GM12878 (cell line): ENCODE measurements at regions of chr2 and their contacts with region 1.

Region 1: GRCh38 chr2:59025157-59025757 is 784.1 kb upstream of the FANCL start:
- DNase-seq: no peak
- ATAC-seq: peak; percentile 90
- H3K4me3 ChIP-seq: no peak overlapping the region
- H3K27ac ChIP-seq: no peak overlapping the region
- H3K4me1 ChIP-seq: no peaks in the 10 kb centered on the region
- H3K27me3 ChIP-seq: 0 out of 4 replicates have a peak, but pooled peaks cover 0 to 2% of the 10 kb centered on the region in 2 experiments
- CTCF ChIP-seq: peak; percentile 75 to 96 (median 94)
- EP300 ChIP-seq: no peak
- POLR2A ChIP-seq: no peak
- RAD21 ChIP-seq: peak; percentile 70

Region 2: GRCh38 chr2:59005836-59006615 is 19.2 kb before region 1 on chr2:
- CTCF ChIA-PET with region 1: interaction called, 12 read pairs
- POLR2A ChIA-PET with region 1: no interaction called
- RAD21 ChIA-PET with region 1: no interaction called
- SMC1A ChIA-PET with region 1: interaction called, 5 read pairs
- in situ Hi-C with region 1: no loop called
- intact Hi-C with region 1: no loop called
- DNase-seq: no peak
- ATAC-seq: no peak
- H3K4me3 ChIP-seq: no peak overlapping the region
- H3K27ac ChIP-seq: no peak overlapping the region
- H3K4me1 ChIP-seq: no peaks in the 10 kb centered on the region
- H3K27me3 ChIP-seq: no peaks in the 10 kb centered on the region
- CTCF ChIP-seq: no peak
- EP300 ChIP-seq: no peak
- POLR2A ChIP-seq: no peak
- RAD21 ChIP-seq: no peak

Region 3: GRCh38 chr2:59176737-59177136 is 151.5 kb after region 1 on chr2:
- CTCF ChIA-PET with region 1: interaction called, 13 read pairs
- POLR2A ChIA-PET with region 1: no interaction called
- RAD21 ChIA-PET with region 1: interaction called, 8 read pairs
- SMC1A ChIA-PET with region 1: interaction called, 8 read pairs
- in situ Hi-C with region 1: no loop called
- intact Hi-C with region 1: loop called (anchors 5 kb)
- DNase-seq: no peak
- ATAC-seq: peak; percentile 42; the same call in 1 of the 3 replicates
- H3K4me3 ChIP-seq: no peak overlapping the region
- H3K27ac ChIP-seq: no peak overlapping the region
- H3K4me1 ChIP-seq: no peaks in the 10 kb centered on the region
- H3K27me3 ChIP-seq: no peaks in the 10 kb centered on the region
- CTCF ChIP-seq: peak in 1 of 3 experiments; percentile 20; a peak in 1 of 6 replicates
- EP300 ChIP-seq: no peak
- POLR2A ChIP-seq: no peak
- RAD21 ChIP-seq: no peak

Region 4: DNA sequence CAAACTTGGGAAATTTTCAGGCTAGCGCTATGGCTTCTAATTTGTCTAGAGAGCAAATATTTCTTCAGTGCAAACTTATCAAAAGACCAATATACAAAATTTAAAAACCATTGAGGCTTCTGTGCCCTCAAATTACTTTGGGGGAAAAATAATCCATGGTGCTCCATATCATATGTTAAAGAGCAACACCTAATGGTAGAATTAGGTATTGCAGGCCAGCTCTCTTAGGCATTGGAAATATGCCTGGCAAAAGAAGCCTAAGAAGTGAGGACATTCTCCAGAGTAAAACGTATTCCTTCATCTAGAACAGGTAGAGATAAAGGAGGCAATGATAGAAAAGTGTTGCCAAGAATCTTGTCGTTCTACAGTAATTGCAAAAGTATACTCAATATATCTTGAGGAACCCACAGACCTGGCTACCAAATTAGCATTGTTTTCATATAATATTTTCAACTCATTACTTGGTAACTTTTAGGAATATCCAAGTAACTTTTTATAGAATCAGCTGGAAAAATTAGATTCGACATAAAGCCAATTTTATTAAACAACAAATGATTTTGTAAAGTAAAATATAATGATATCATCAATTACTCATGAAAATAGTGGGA is 1127.1 kb after region 1 on chr2:
- CTCF ChIA-PET with region 1: interaction called, 10 read pairs
- POLR2A ChIA-PET with region 1: no interaction called
- RAD21 ChIA-PET with region 1: no interaction called
- SMC1A ChIA-PET with region 1: interaction called, 4 read pairs
- in situ Hi-C with region 1: no loop called
- intact Hi-C with region 1: no loop called
- DNase-seq: no peak
- ATAC-seq: peak; percentile 55; the same call in 2 of the 3 replicates
- H3K4me3 ChIP-seq: no peak overlapping the region
- H3K27ac ChIP-seq: no peak overlapping the region
- H3K4me1 ChIP-seq: peaks cover 9% of the 10 kb centered on the region
- H3K27me3 ChIP-seq: no peaks in the 10 kb centered on the region
- CTCF ChIP-seq: peak; percentile 48 to 87 (median 75)
- EP300 ChIP-seq: no peak
- POLR2A ChIP-seq: no peak
- RAD21 ChIP-seq: peak; percentile 60

Region 5: DNA sequence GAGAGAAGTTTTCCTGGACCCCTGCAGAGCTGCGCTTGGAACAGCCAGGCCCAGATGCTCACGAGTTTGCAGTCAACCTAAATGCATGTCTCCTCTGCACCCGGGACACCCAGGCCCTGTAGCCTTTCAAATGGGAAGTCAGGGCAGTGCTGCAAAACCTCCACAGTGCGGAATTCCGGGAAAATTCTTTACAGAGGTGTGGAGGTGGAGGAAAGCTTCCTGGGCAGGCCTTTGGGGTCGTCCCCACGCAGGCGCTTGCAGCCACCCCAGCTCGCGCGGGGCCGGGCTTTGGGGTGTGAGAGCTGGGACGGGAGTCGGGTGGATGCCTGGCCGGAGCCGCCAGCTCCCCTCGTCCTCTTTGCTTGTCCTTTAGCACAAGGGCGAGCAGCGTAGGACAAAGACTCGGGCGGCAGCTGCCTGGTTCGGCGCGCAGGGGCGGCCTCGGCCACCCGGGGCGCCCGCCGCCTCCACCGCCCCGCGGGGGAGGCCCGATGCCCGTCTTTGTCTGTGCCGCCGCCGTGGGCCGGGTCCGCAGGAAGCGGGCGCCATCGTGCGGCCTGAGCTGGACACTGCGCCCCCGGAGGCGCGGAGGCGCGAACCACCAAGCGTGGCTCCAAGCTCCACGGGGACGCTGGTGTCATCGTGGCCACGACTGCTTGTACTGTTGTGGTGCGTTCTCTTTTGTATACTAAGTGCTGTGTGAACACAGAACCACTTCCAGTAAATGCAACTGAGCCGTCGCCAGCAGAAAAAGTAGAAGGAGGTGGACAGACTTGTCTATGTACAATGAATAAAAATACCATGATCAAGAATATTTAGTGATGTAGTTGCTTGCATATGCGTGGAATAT is 1556.4 kb after region 1 on chr2:
- CTCF ChIA-PET with region 1: interaction called, 19 read pairs
- POLR2A ChIA-PET with region 1: no interaction called
- RAD21 ChIA-PET with region 1: interaction called, 7 read pairs
- SMC1A ChIA-PET with region 1: interaction called, 4 read pairs
- in situ Hi-C with region 1: no loop called
- intact Hi-C with region 1: loop called (anchors 5 kb)
- DNase-seq: no peak
- ATAC-seq: peak; percentile 99
- H3K4me3 ChIP-seq: no peak overlapping the region
- H3K27ac ChIP-seq: no peak overlapping the region
- H3K4me1 ChIP-seq: no peaks in the 10 kb centered on the region
- H3K27me3 ChIP-seq: no peaks in the 10 kb centered on the region; a peak in 3 of 4 replicates
- CTCF ChIP-seq: peak; percentile 93 to 94 (median 94); a peak in 5 of 6 replicates
- EP300 ChIP-seq: no peak
- POLR2A ChIP-seq: no peak
- RAD21 ChIP-seq: peak; percentile 90